Activated T-helper 1 cell treated with anti-CD3 and anti-CD28 coated beads, Interleukin-12 subunit alpha, Interleukin-12 subunit beta, Interleukin-2, Interleukin-4 antibody, amounts not matched to agents 30 ng/mL and 10 ng/mL and 1 ng/mL, durations not matched to agents 14 hours and 24 hours and 36 hours (primary cell): ENCODE measurements at regions of chr5 and their contacts with region 1.

Region 1: GRCh38 chr5:79857714-79858409 is 133.2 kb downstream of the MTX3 start:
- DNase-seq: peak; percentile 62
- H3K4me3 Mint-ChIP-seq: no peak overlapping the region
- H3K27ac Mint-ChIP-seq: no peak overlapping the region
- H3K4me1 Mint-ChIP-seq: no peaks in the 10 kb centered on the region
- H3K27me3 Mint-ChIP-seq: peaks cover 17% of the 10 kb centered on the region

Region 2: DNA sequence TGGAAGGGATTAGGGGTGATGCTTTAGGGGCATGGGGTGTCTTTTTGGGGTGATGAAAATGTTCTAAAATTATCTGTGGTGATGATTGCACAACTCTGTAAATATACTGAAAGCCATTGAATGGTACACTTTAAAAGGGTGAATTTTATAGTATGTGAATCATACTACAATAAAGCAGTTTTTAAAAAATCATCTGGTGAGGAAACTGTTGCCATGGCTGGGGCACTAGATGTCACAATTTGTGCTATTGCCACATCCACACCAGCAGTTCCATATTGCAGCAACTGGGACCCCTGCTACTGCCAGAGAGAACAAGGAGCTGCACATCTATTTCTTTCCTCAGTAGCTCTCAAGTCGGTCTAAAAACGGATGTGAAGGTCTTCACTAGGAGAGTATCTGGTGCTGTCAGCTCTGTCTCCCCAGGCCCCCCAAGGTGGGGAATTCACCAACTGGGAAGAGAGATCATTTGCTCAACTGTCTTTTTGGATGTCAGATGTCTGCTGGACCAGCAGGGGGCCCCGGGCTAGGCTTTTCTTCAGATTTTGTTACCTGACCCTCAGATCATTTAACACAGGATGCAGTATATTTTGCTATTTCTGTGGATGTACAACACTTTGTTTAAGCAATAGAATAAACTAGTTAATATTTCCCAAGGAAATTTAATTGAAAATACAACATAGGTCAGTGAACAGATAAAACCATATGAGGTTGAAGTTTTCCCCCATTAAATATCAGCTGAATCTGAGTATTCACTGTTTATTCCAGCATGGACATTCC is 155.1 kb before region 1 on chr5:
- intact Hi-C with region 1: loop called (anchors 1 kb)
- DNase-seq: no peak
- H3K4me3 Mint-ChIP-seq: no peak overlapping the region
- H3K27ac Mint-ChIP-seq: no peak overlapping the region
- H3K4me1 Mint-ChIP-seq: peaks cover 22% of the 10 kb centered on the region
- H3K27me3 Mint-ChIP-seq: peaks cover 4% of the 10 kb centered on the region

Region 3: GRCh38 chr5:79800979-79801827 is 56.7 kb before region 1 on chr5:
- intact Hi-C with region 1: no loop called
- DNase-seq: no peak
- H3K4me3 Mint-ChIP-seq: no peak overlapping the region
- H3K27ac Mint-ChIP-seq: peak overlapping the region; percentile 42
- H3K4me1 Mint-ChIP-seq: peaks cover 19% of the 10 kb centered on the region
- H3K27me3 Mint-ChIP-seq: no peaks in the 10 kb centered on the region